ENCODE measurements at regions of chr7 and their contacts with region 1.

Region 1: DNA sequence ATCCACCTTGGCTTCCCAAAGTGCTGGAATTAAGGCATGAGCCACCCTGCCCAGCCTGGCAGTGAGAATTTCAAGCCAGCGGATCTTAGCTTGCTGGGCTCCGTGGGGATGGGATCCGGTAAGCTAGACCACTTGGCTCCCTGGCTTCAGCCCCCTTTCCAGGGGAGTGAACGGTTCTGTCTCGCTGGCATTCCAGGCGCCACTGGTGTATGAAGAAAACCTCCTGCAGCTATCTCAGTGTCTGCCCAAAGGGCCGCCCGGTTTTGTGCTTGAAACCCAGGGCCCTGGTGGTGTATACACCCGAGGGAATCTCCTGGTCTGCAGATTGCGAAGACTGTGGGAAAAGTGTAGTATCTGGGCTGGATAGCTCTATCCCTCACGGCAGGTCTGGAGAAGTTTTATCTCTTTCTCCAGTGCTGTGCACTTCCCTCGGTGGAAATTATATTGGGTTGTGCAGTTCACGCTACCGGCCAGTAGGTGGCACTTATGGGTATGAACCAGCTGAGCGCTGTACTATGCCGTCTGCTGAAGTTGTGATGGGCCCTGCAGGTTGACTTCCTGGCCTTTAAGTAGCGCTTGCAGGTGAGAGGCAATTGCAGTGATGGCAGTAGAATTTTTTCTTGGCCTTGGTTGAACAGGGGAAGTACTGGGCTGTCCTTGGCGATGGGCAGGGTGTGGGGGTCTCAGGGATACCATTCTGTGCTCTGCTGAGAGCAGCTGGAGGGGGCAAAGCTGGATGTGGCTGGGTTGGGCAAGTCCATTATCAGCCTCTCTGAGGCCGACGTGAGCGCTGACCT is 138.0 kb upstream of the MTPN start:
- DNase-seq: peak; percentile 63
- CTCF ChIP-seq: peak; percentile 72

Region 2: GRCh38 chr7:136016649-136017395 is 98.3 kb before region 1 on chr7:
- in situ Hi-C with region 1: no loop called
- DNase-seq: no peak
- CTCF ChIP-seq: no peak

Region 3: GRCh38 chr7:136687693-136688322 is 572.6 kb after region 1 on chr7:
- in situ Hi-C with region 1: loop called (anchors 25 kb)
- DNase-seq: peak; percentile 17
- CTCF ChIP-seq: peak; percentile 37